RWPE1 (cell line): ENCODE measurements at regions of chr17 and their contacts with region 1.

Region 1: GRCh38 chr17:50783193-50783660 is 15.9 kb upstream of the ANKRD40CL start:
- DNase-seq: peak; percentile 92
- H3K27ac ChIP-seq: peak overlapping the region; percentile 8; the same call in 1 of the 2 replicates
- CTCF ChIP-seq: peak; percentile 99

Region 2: GRCh38 chr17:50834429-50835300 is 51.4 kb after region 1 on chr17:
- CTCF ChIA-PET with region 1: interaction called, 18 read pairs
- POLR2A ChIA-PET with region 1: no interaction called
- DNase-seq: no peak
- H3K27ac ChIP-seq: no peak overlapping the region
- CTCF ChIP-seq: no peak

Region 3: DNA sequence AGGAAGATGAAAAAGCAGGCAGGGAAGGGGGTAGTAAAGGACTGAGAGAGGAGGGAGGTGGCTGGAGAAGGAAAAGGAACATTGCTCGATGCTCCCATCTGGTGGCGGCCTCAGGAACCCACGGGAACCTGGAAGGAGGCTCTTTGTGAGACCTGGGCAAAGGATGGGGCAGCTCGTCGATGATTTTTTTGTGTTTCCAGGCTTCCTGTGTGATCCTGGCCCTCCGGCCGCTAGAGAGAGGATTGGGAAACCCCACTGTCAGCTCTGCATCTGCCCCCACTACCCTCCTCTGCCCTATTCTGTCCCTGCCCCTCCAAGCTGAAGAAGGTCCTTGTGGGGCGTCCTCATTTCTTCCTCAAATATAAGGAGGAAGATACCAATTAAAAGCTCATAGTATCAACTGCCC is 58.7 kb after region 1 on chr17:
- CTCF ChIA-PET with region 1: interaction called, 75 read pairs
- POLR2A ChIA-PET with region 1: no interaction called
- DNase-seq: peak; percentile 79
- H3K27ac ChIP-seq: no peak overlapping the region
- CTCF ChIP-seq: peak; percentile 82